Endothelial cell of umbilical vein (primary cell): ENCODE measurements at regions of chr11 and their contacts with region 1.

Region 1: DNA sequence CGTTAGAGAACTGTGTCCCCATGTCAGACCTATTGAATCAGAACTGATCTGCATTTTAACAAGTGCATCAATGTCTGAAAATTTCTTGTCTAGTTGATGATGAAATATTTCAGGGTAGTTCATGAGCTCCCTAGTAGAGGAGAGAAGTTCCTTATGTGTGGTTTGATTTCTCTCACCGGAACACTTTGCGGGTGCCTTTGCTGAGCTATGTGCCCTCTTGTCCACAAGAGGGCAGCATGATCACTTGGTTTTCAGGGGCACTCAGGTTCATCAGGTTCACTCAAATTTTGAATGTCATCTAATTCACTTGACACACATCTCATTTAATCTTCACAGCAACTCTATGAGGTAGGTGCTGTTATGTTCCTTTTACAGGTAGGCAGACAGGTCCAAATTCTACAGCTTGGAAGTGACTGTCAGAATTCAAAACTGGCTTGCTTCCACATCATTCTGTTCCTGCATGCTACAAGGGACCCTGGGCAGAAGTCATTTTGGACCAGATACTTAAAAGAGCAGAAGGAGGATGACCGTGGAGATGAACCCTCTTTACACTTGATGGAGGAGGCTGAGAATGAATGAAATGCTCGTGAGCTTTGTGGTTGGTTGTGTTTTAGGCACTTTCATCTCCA is 55.6 kb downstream of the P4HA3 start:
- DNase-seq: peak; percentile 81
- H3K4me3 ChIP-seq: no peak overlapping the region
- H3K27ac ChIP-seq: no peak overlapping the region
- H3K4me1 ChIP-seq: no peaks in the 10 kb centered on the region
- H3K27me3 ChIP-seq: no peaks in the 10 kb centered on the region
- CTCF ChIP-seq: peak; percentile 83 to 94
- POLR2A ChIP-seq: no peak

Region 2: GRCh38 chr11:74269161-74269811 is 13.4 kb after region 1 on chr11:
- CTCF ChIA-PET with region 1: interaction called, 11 read pairs
- POLR2A ChIA-PET with region 1: no interaction called
- dilution Hi-C with region 1: no loop called
- intact Hi-C with region 1: no loop called
- DNase-seq: no peak
- H3K4me3 ChIP-seq: no peak overlapping the region
- H3K27ac ChIP-seq: no peak overlapping the region
- H3K4me1 ChIP-seq: no peaks in the 10 kb centered on the region
- H3K27me3 ChIP-seq: no peaks in the 10 kb centered on the region
- CTCF ChIP-seq: no peak
- POLR2A ChIP-seq: no peak

Region 3: GRCh38 chr11:74330075-74330858 is 74.4 kb after region 1 on chr11:
- CTCF ChIA-PET with region 1: interaction called, 27 read pairs
- POLR2A ChIA-PET with region 1: no interaction called
- dilution Hi-C with region 1: no loop called
- intact Hi-C with region 1: no loop called
- DNase-seq: peak; percentile 87
- H3K4me3 ChIP-seq: no peak overlapping the region
- H3K27ac ChIP-seq: peak overlapping the region; percentile 70
- H3K4me1 ChIP-seq: peaks cover 63% of the 10 kb centered on the region
- H3K27me3 ChIP-seq: no peaks in the 10 kb centered on the region
- CTCF ChIP-seq: no peak
- POLR2A ChIP-seq: no peak

Region 4: DNA sequence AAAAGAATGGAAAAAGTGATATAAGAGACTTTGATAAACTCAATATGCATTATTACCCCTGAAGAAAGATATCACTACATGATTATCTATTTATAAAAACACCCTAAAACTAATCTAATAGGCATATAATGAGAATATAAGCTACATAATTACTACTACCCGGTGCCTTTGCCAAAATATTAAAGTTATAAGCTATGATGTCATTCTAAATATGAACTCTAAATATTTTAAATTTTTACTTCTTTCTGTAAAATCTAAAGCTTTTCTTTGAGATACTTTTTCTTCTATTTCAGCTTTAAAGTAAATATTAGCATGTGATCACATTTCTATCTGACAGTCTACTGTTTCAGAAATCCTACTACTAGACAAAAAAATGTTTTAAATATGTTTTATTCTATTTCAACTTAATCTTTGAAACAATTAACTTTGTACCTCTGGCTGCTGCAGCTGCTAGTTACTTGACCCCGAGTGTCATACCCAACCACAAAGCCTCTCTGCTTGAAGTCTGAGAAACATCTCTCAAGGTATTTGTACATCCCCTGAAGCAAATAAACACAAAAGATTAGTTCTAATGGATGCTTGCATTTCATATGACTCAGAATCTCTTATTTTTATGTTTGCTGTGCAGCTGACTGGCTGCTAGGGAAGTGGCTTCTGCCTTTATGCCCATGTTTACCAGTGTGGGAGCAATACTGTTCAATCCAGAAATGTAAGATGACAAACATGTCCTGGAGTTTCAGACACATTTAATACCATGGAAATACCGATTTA is 115.6 kb after region 1 on chr11:
- CTCF ChIA-PET with region 1: interaction called, 13 read pairs
- POLR2A ChIA-PET with region 1: no interaction called
- dilution Hi-C with region 1: no loop called
- intact Hi-C with region 1: no loop called
- DNase-seq: peak; percentile 75
- H3K4me3 ChIP-seq: no peak overlapping the region
- H3K27ac ChIP-seq: no peak overlapping the region
- H3K4me1 ChIP-seq: no peaks in the 10 kb centered on the region
- H3K27me3 ChIP-seq: no peaks in the 10 kb centered on the region
- CTCF ChIP-seq: no peak
- POLR2A ChIP-seq: no peak

Region 5: DNA sequence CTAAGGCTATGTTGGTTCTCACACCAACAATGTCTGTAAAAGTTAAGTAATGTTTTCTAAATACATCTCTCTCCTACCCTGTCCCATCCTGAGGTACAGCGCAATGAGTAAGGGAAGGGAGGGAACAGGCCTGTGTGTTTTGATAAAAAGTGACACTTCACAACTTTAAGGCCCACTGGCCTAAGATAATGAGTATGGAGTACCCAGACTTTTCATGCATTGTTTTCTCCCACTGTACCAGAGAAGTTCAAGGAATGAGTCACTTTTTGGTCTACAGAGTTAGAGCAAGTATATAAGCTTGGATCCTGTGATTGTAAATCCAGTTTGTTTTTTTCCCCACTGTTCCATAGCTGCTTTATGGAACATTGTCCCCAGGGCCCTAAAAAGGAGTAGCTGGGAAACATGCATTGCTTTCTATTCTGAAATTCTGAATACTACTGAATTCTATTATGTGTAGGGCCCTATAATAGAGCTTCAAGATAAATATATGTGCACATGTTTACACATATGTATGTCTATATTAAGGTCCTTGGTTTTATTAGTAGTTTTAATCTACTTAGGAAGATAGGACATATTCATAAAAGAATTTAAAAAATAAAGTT is 181.7 kb after region 1 on chr11:
- CTCF ChIA-PET with region 1: interaction called, 30 read pairs
- POLR2A ChIA-PET with region 1: no interaction called
- dilution Hi-C with region 1: no loop called
- intact Hi-C with region 1: no loop called
- DNase-seq: peak; percentile 82
- H3K4me3 ChIP-seq: no peak overlapping the region
- H3K27ac ChIP-seq: peak overlapping the region; percentile 52
- H3K4me1 ChIP-seq: peaks cover 14% of the 10 kb centered on the region
- H3K27me3 ChIP-seq: no peaks in the 10 kb centered on the region
- CTCF ChIP-seq: no peak
- POLR2A ChIP-seq: no peak

Region 6: GRCh38 chr11:74570266-74571061 is 314.6 kb after region 1 on chr11:
- CTCF ChIA-PET with region 1: interaction called, 49 read pairs
- POLR2A ChIA-PET with region 1: no interaction called
- dilution Hi-C with region 1: no loop called
- intact Hi-C with region 1: loop called (anchors 1 kb)
- DNase-seq: peak; percentile 71
- H3K4me3 ChIP-seq: no peak overlapping the region
- H3K27ac ChIP-seq: no peak overlapping the region
- H3K4me1 ChIP-seq: no peaks in the 10 kb centered on the region
- H3K27me3 ChIP-seq: peaks cover 4 to 9% of the 10 kb centered on the region in 2 experiments
- CTCF ChIP-seq: peak; percentile 56 to 74
- POLR2A ChIP-seq: no peak